Right cardiac atrium (tissue), 5 donors: ENCODE measurements at regions of chr4 and their contacts with region 1.

Region 1: DNA sequence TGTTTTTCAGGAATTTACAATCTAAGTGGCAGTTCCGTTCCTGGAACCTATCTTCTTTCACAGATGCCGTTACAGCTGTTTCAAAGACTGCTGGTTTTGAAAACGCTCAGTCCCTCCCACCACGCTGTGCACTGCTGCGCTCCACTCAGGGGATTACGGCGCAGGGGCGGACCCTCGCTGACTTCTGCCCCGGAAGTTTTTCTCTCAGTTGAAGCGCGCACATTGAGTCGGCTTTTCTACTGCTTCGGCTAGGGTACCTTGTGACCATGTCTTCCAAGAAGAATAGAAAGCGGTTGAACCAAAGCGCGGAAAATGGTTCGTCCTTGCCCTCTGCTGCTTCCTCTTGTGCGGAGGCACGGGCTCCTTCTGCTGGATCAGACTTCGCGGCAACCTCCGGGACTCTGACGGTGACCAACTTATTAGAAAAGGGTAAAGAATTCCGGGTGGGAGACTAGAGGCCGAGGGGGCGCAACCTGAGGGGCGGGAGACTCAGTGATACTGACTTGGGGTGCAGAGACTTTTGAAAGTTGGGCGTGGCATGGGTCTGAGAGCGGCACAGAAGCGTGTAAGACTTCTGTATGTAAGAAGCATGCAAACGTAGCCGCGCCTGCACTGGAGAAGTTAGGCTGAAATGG is 597 bp upstream of the NUDT6 start:
- DNase-seq: peak; percentile 85 to 92 (median 92)
- ATAC-seq: peak; percentile 99
- H3K4me3 ChIP-seq: peak overlapping the region; percentile 98
- H3K27ac ChIP-seq: peak overlapping the region; percentile 87
- H3K4me1 ChIP-seq: peaks cover 2% of the 10 kb centered on the region
- H3K27me3 ChIP-seq: no peaks in the 10 kb centered on the region

Region 2: DNA sequence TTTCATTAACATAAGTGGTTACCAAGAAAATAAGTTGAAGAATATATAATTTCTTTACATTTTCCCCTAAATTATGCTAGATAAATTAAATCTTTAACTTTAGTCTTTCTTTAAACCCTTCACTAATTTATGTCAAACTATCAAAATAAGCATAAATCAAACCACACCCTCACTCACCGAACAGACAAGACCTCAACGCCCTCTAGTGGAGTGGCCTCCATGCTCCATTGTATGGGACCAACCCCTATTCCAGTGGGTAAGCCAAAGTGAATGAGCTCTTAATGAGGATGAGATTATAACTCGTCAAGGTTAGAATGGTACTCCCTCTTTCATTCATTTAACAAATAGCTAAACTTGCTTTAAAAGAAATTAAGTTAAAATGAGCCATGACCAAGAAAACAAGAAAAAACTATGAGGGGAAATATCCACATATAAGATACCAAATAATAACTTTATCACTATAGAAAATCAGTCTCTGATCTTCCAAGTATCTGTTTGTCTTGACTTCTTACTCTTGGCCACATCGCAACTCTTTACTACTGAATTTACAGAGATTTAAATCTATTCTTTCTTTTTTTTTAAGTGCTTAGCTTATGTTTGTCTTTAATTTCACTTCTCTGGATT is 206.1 kb before region 1 on chr4:
- intact Hi-C with region 1: no loop called
- DNase-seq: peak; percentile 69 to 89 (median 74)
- ATAC-seq: peak; percentile 81 to 87
- H3K4me3 ChIP-seq: no peak overlapping the region
- H3K27ac ChIP-seq: no peak overlapping the region
- H3K4me1 ChIP-seq: no peaks in the 10 kb centered on the region
- H3K27me3 ChIP-seq: no peaks in the 10 kb centered on the region

Region 3: GRCh38 chr4:122827879-122828601 is 95.0 kb before region 1 on chr4:
- intact Hi-C with region 1: loop called in 1 of 4 experiments (anchors 5 kb)
- DNase-seq: peak in 1 of 3 donors; percentile 65
- ATAC-seq: peak; percentile 36 to 70
- H3K4me3 ChIP-seq: peak overlapping the region; percentile 89
- H3K27ac ChIP-seq: peak overlapping the region; percentile 36
- H3K4me1 ChIP-seq: no peaks in the 10 kb centered on the region
- H3K27me3 ChIP-seq: no peaks in the 10 kb centered on the region